Activated T-helper 2 cell treated with anti-CD3 and anti-CD28 coated beads, Interferon-gamma antibody, Interleukin-2, Interleukin-4, amounts not matched to agents 10 μg/mL and 5 μg/mL and 100 μg/mL, durations not matched to agents 14 hours and 24 hours and 36 hours (primary cell): ENCODE measurements at regions of chr16 and their contacts with region 1.

Region 1: GRCh38 chr16:22232277-22233042 is 26.4 kb downstream of the EEF2K start:
- DNase-seq: no peak
- H3K4me3 Mint-ChIP-seq: no peak overlapping the region
- H3K27ac Mint-ChIP-seq: peak overlapping the region; percentile 40
- H3K4me1 Mint-ChIP-seq: peaks cover 13% of the 10 kb centered on the region
- H3K27me3 Mint-ChIP-seq: no peaks in the 10 kb centered on the region

Region 2: GRCh38 chr16:22109258-22109898 is 123.1 kb before region 1 on chr16:
- intact Hi-C with region 1: no loop called
- DNase-seq: no peak
- H3K4me3 Mint-ChIP-seq: no peak overlapping the region
- H3K27ac Mint-ChIP-seq: no peak overlapping the region
- H3K4me1 Mint-ChIP-seq: peaks cover 4% of the 10 kb centered on the region
- H3K27me3 Mint-ChIP-seq: peaks cover 17% of the 10 kb centered on the region

Region 3: DNA sequence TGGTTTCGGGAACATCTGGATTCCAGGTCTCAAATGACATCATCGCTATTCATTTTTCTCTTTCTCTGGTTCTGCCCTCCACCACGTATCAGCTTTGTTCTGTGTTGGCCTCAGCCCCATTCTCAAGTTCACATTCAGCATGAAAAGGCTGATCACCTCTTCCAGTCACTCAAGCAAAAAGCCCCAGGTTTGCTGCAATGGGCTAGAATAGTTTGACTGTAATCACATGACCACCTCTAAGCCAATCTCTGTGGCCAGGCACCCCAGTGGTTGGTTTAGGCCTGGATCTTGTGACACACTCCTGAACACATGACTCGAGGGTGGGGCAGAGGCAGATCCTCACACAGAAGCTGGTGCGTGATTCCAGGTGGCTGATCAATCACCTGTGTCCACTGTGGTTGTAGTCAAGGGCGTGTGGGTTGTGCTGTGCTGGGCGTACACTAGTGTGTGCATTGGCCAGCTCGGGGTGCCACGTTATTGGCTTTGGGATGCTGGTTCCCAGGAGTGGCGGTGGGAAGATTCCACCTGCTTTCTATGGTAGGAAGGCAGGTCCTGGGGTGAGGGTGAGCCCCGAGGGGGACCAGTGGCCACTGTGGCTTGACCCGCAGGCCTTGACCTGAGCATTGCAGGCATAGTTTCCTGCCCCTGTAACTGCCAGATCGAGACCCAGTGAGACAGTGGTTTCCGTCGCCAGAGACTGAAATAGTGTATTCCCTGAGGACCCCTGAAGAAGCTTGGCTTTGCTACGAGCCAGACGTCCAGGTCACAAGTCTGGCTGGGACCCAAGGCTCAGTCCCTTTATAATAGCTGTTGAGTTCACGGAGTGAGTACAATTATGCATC is 14.3 kb before region 1 on chr16:
- intact Hi-C with region 1: loop called (anchors 2 kb)
- DNase-seq: no peak
- H3K4me3 Mint-ChIP-seq: no peak overlapping the region
- H3K27ac Mint-ChIP-seq: peak overlapping the region; percentile 76
- H3K4me1 Mint-ChIP-seq: peaks cover 46% of the 10 kb centered on the region
- H3K27me3 Mint-ChIP-seq: no peaks in the 10 kb centered on the region